ENCODE measurements at regions of chr12 and their contacts with region 1.

Region 1: GRCh38 chr12:120421701-120422100 is 16.2 kb upstream of the COX6A1 start:
- DNase-seq: no peak
- H3K4me3 ChIP-seq: no peak overlapping the region
- CTCF ChIP-seq: no peak

Region 2: GRCh38 chr12:120317224-120318105 is 104.2 kb before region 1 on chr12:
- in situ Hi-C with region 1: no loop called
- DNase-seq: peak; percentile 98
- H3K4me3 ChIP-seq: peak overlapping the region; percentile 52
- CTCF ChIP-seq: peak; percentile 77

Region 3: GRCh38 chr12:120369603-120370342 is 51.9 kb before region 1 on chr12:
- in situ Hi-C with region 1: loop called (anchors 5 kb)
- DNase-seq: no peak
- H3K4me3 ChIP-seq: peak overlapping the region; percentile 41
- CTCF ChIP-seq: no peak

Region 4: DNA sequence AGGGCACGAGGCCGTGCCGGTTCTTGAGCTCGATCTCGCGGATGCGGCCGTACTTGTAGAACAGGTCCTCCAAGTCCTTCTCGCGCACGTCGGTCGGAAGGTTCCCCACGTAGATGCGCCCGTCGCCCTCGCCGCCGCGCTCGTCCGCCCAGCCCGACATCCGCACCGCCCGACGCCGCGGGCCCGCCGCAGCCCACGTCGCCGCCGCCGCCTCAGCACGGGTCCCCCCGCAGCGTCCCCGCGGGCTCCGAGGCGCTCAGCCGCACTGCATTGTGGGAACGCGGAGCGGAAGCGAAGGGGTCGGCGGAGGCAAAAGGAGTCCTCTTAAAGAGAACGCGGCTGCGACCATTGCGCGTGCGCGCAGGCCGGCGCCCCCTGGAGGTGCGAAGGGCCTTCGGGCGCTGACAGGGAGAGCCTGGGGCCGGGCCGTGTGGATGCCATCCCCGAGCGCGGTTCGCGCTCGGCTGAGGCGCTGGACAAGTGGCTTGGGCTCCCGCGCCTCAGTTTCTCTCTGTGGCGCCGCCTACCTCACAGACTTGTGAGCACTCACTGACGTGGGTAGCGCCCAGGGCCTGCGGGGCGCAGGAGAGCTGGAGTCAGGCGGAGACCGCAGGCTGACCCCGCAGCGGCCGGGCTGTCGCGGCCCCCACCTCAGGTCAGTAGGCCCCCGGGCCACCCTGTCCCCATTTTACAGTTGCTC is 47.9 kb after region 1 on chr12 and contains the start of gene SRSF9:
- in situ Hi-C with region 1: no loop called
- DNase-seq: peak; percentile 90
- H3K4me3 ChIP-seq: peak within 1 kb of the TSS; percentile 79
- CTCF ChIP-seq: peak; percentile 84